Activated CD8-positive, alpha-beta T cell treated with anti-CD3 and anti-CD28 coated beads, Interleukin-2, amount 10 ng/mL, durations not matched to agents 7 days and 5 days (primary cell): ENCODE measurements at regions of chr15 and their contacts with region 1.

Region 1: GRCh38 chr15:43285609-43286037 is 18.9 kb upstream of the TGM5 start:
- DNase-seq: peak; percentile 79
- ATAC-seq: peak; percentile 61
- H3K4me3 Mint-ChIP-seq: no peak overlapping the region
- H3K27ac Mint-ChIP-seq: peak overlapping the region; percentile 28
- H3K4me1 Mint-ChIP-seq: peaks cover 12% of the 10 kb centered on the region
- H3K27me3 Mint-ChIP-seq: peaks cover 18% of the 10 kb centered on the region

Region 2: GRCh38 chr15:42863572-42864239 is 421.9 kb before region 1 on chr15:
- CTCF ChIA-PET with region 1: no interaction called
- POLR2A ChIA-PET with region 1: no interaction called
- DNase-seq: no peak
- ATAC-seq: no peak
- H3K4me3 Mint-ChIP-seq: no peak overlapping the region
- H3K27ac Mint-ChIP-seq: no peak overlapping the region
- H3K4me1 Mint-ChIP-seq: no peaks in the 10 kb centered on the region
- H3K27me3 Mint-ChIP-seq: no peaks in the 10 kb centered on the region

Region 3: DNA sequence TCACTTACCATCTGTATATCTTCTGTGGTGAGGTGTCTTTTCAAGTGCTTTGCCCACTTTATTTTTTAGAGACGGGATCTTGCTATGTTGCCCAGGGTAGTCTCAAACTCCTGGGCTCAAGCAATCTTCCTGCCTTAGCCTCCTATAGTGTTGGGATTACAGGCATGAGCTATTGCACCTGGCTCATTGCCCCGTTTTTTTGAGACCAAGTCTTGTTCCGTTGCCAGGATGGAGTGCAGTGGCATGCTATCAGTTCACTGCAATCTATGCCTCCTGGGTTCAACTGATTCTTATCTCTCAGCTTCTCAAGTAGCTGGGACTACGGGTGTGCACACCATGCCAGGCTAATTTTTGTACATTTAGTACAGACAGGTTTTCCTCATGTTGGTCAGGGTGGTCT is 312.5 kb before region 1 on chr15:
- CTCF ChIA-PET with region 1: no interaction called
- POLR2A ChIA-PET with region 1: no interaction called
- DNase-seq: no peak
- ATAC-seq: no peak
- H3K4me3 Mint-ChIP-seq: no peak overlapping the region
- H3K27ac Mint-ChIP-seq: no peak overlapping the region
- H3K4me1 Mint-ChIP-seq: no peaks in the 10 kb centered on the region
- H3K27me3 Mint-ChIP-seq: no peaks in the 10 kb centered on the region

Region 4: GRCh38 chr15:43194795-43195194 is 90.8 kb before region 1 on chr15:
- CTCF ChIA-PET with region 1: interaction called, 11 read pairs
- POLR2A ChIA-PET with region 1: interaction called, 4 read pairs
- DNase-seq: no peak
- ATAC-seq: no peak
- H3K4me3 Mint-ChIP-seq: no peak overlapping the region
- H3K27ac Mint-ChIP-seq: no peak overlapping the region
- H3K4me1 Mint-ChIP-seq: peaks cover 8% of the 10 kb centered on the region
- H3K27me3 Mint-ChIP-seq: no peaks in the 10 kb centered on the region

Region 5: GRCh38 chr15:43218908-43219706 is 66.5 kb before region 1 on chr15:
- CTCF ChIA-PET with region 1: interaction called, 274 read pairs
- POLR2A ChIA-PET with region 1: no interaction called
- DNase-seq: no peak
- ATAC-seq: no peak
- H3K4me3 Mint-ChIP-seq: no peak overlapping the region
- H3K27ac Mint-ChIP-seq: no peak overlapping the region
- H3K4me1 Mint-ChIP-seq: no peaks in the 10 kb centered on the region
- H3K27me3 Mint-ChIP-seq: peaks cover 20% of the 10 kb centered on the region

Region 6: GRCh38 chr15:43241100-43241499 is 44.5 kb before region 1 on chr15:
- CTCF ChIA-PET with region 1: interaction called, 16 read pairs
- POLR2A ChIA-PET with region 1: no interaction called
- DNase-seq: no peak
- ATAC-seq: no peak
- H3K4me3 Mint-ChIP-seq: no peak overlapping the region
- H3K27ac Mint-ChIP-seq: no peak overlapping the region
- H3K4me1 Mint-ChIP-seq: peaks cover 55% of the 10 kb centered on the region
- H3K27me3 Mint-ChIP-seq: no peaks in the 10 kb centered on the region

Region 7: GRCh38 chr15:43299411-43299810 is 13.8 kb after region 1 on chr15:
- CTCF ChIA-PET with region 1: interaction called, 12 read pairs
- POLR2A ChIA-PET with region 1: no interaction called
- DNase-seq: no peak
- ATAC-seq: no peak
- H3K4me3 Mint-ChIP-seq: no peak overlapping the region
- H3K27ac Mint-ChIP-seq: no peak overlapping the region
- H3K4me1 Mint-ChIP-seq: no peaks in the 10 kb centered on the region
- H3K27me3 Mint-ChIP-seq: peaks cover 43% of the 10 kb centered on the region